ENCODE measurements at regions of chr1 and their contacts with region 1.

Region 1: GRCh38 chr1:212967801-212968200 is 17.5 kb downstream of the VASH2 start:
- DNase-seq: no peak
- H3K4me3 ChIP-seq: no peak overlapping the region
- H3K27me3 ChIP-seq: peaks cover 3% of the 10 kb centered on the region
- CTCF ChIP-seq: peak; percentile 64

Region 2: DNA sequence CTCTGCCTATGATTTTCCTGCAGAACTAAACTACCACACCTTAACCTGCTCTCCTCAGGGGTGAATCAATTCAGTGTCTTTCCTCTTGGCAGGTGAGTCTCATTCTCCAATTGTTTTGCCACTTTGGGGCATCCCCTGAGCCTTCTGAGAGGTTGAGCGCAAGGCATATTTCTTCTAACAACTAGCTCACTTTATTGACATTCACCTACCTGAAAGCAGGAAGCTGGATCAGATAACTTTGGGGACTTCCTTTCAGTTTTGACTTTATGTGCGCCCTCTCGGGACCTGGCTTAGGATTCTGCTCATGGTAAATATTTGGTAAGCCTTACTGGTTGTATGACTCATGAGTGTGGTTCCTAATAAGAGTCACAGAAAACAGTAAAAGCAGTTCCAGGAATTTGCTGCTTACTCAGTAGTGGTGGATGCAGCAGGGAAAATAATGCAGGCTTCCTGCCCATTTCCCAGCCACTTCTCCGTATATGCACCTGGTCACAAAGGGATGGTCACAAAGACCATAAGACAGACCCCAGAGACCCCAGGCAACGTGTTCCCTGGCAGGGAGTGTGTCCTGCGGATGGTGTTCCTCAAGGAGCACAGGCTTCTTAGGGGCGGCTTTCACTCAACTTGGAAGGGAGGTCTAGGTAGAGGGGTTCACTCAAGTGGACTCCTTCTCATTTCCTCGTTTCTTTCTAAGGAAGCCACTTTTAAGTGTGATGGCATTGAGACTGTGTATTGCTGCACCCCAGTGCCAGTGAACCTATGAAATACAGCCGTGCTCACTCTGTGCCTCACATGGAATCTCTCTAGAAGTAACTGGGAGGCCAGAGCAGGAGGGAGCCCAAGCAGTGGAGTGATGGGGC is 246.2 kb before region 1 on chr1:
- CTCF ChIA-PET with region 1: no interaction called
- POLR2A ChIA-PET with region 1: no interaction called
- DNase-seq: peak; percentile 43
- H3K4me3 ChIP-seq: no peak overlapping the region
- H3K27me3 ChIP-seq: no peaks in the 10 kb centered on the region
- CTCF ChIP-seq: no peak

Region 3: GRCh38 chr1:212979340-212980122 is 11.7 kb after region 1 on chr1:
- CTCF ChIA-PET with region 1: interaction called, 13 read pairs
- POLR2A ChIA-PET with region 1: no interaction called
- DNase-seq: no peak
- H3K4me3 ChIP-seq: no peak overlapping the region
- H3K27me3 ChIP-seq: peaks cover 1% of the 10 kb centered on the region
- CTCF ChIP-seq: no peak

Region 4: DNA sequence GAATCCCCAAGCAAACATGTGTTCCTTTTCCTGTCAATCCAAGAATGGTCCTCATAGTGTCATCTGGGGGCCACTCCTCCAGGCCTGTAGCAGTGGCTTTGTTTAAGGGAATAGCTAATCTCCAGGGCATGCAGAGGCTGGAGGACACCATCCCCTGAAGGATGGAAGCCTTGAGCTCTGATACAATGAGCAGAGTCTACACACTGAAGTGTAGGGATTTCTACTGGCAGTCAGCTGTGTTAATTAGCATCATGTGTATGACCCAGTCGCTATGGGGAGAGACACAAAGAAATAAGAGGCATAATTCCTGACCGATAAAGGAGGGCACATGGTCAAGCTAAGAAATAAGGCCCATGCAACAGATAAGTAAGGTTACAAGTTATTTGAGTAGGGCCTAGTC is 18.8 kb after region 1 on chr1:
- CTCF ChIA-PET with region 1: interaction called, 13 read pairs
- POLR2A ChIA-PET with region 1: no interaction called
- DNase-seq: no peak
- H3K4me3 ChIP-seq: no peak overlapping the region
- H3K27me3 ChIP-seq: peaks cover 1% of the 10 kb centered on the region
- CTCF ChIP-seq: no peak

Region 5: DNA sequence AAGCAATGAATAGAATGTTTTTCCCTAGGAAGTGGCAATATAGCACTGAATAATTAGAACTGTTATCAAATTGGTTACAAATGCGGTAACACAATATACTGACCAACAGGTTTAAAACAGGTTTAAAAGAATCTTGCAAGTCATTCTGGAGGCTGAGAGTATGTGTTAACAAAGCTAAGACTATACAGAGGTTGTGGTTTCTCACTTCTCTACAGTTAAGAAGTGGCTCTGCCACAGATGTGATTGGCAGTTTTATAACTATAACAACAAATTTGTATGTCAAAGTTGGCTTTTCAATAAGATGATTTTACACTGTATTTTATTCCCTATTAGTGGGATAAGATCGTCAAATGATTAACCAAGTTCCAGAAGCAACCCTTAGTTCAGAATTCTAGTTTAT is 40.8 kb after region 1 on chr1:
- CTCF ChIA-PET with region 1: no interaction called
- POLR2A ChIA-PET with region 1: no interaction called
- DNase-seq: no peak
- H3K4me3 ChIP-seq: no peak overlapping the region
- H3K27me3 ChIP-seq: no peaks in the 10 kb centered on the region
- CTCF ChIP-seq: no peak

Measured in BJ (cell line).